ENCODE measurements at regions of chr15 and their contacts with region 1.

Region 1: GRCh38 chr15:73633111-73633990 is at the start of gene NPTN:
- DNase-seq: peak; percentile 99
- H3K4me3 Mint-ChIP-seq: peak within 1 kb of the TSS; percentile 78
- H3K27ac Mint-ChIP-seq: no peak within 1 kb of the TSS
- H3K4me1 Mint-ChIP-seq: peaks cover 52% of the 10 kb centered on the region
- H3K27me3 Mint-ChIP-seq: peaks cover 12% of the 10 kb centered on the region
- total RNA-seq, gene NPTN: 20.8 to 22.8 TPM

Region 2: GRCh38 chr15:73051811-73052678 is 581.3 kb before region 1 on chr15 and contains the start of gene NEO1:
- CTCF ChIA-PET with region 1: no interaction called
- intact Hi-C with region 1: loop called (anchors 5 kb)
- DNase-seq: peak; percentile 81
- H3K4me3 Mint-ChIP-seq: peak within 1 kb of the TSS; percentile 77
- H3K27ac Mint-ChIP-seq: no peak within 1 kb of the TSS
- H3K4me1 Mint-ChIP-seq: peaks cover 6% of the 10 kb centered on the region
- H3K27me3 Mint-ChIP-seq: peaks cover 8% of the 10 kb centered on the region
- total RNA-seq, gene NEO1: 4.3 to 4.4 TPM

Region 3: GRCh38 chr15:73305331-73306211 is 327.8 kb before region 1 on chr15:
- CTCF ChIA-PET with region 1: interaction called, 4 read pairs
- intact Hi-C with region 1: loop called (anchors 1 kb)
- DNase-seq: peak; percentile 36
- H3K4me3 Mint-ChIP-seq: no peak overlapping the region
- H3K27ac Mint-ChIP-seq: no peak overlapping the region
- H3K4me1 Mint-ChIP-seq: peaks cover 4% of the 10 kb centered on the region
- H3K27me3 Mint-ChIP-seq: no peaks in the 10 kb centered on the region

Region 4: GRCh38 chr15:73601451-73602445 is 31.6 kb before region 1 on chr15:
- CTCF ChIA-PET with region 1: interaction called, 63 read pairs
- intact Hi-C with region 1: no loop called
- DNase-seq: no peak
- H3K4me3 Mint-ChIP-seq: no peak overlapping the region
- H3K27ac Mint-ChIP-seq: no peak overlapping the region
- H3K4me1 Mint-ChIP-seq: peaks cover 22% of the 10 kb centered on the region
- H3K27me3 Mint-ChIP-seq: no peaks in the 10 kb centered on the region

Region 5: DNA sequence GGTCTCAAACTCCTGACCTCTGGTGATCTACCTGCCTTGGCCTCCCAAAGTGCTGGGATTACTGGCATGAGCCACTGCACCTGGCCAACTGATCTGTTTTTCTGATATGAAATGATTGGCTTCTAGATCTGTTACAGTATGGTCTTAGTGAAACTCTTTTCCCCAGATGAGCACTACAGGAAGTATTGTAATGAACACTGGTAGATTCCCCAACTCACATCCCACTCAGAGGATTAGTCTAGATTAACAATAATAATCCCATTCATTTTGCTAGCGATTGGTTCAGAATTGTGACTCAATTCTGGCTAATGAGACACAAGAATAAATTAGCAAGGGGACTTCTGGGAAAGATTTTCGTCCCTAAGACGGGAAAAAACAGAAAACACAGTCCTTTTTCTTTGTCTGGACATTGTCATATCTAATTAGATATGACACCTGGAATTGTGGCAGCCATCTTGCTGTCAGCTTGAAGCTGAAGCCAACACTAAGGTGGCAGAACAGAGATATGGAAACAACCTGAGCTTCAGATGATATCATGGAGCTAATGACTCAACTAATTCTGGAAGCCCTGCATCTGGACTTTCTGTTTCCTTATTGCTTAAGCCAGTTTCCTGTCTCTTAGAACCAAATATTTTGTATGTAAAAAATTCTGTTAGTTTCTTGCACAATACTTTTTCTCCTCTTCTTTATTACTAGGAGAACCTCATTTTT is 17.2 kb after region 1 on chr15:
- CTCF ChIA-PET with region 1: interaction called, 40 read pairs
- intact Hi-C with region 1: loop called (anchors 1 kb)
- DNase-seq: peak; percentile 48
- H3K4me3 Mint-ChIP-seq: no peak overlapping the region
- H3K27ac Mint-ChIP-seq: peak overlapping the region; percentile 60
- H3K4me1 Mint-ChIP-seq: peaks cover 28% of the 10 kb centered on the region
- H3K27me3 Mint-ChIP-seq: peaks cover 15% of the 10 kb centered on the region

Region 6: GRCh38 chr15:73697033-73697467 is 63.7 kb after region 1 on chr15:
- CTCF ChIA-PET with region 1: interaction called, 414 read pairs
- intact Hi-C with region 1: loop called (anchors 1 kb)
- DNase-seq: peak; percentile 95
- H3K4me3 Mint-ChIP-seq: peak overlapping the region; percentile 9
- H3K27ac Mint-ChIP-seq: peak overlapping the region; percentile 35
- H3K4me1 Mint-ChIP-seq: peaks cover 24% of the 10 kb centered on the region
- H3K27me3 Mint-ChIP-seq: peaks cover 60% of the 10 kb centered on the region

Region 7: GRCh38 chr15:73873889-73874511 is 240.6 kb after region 1 on chr15:
- CTCF ChIA-PET with region 1: no interaction called
- intact Hi-C with region 1: no loop called
- DNase-seq: peak; percentile 51
- H3K4me3 Mint-ChIP-seq: no peak overlapping the region
- H3K27ac Mint-ChIP-seq: no peak overlapping the region
- H3K4me1 Mint-ChIP-seq: no peaks in the 10 kb centered on the region
- H3K27me3 Mint-ChIP-seq: peaks cover 26% of the 10 kb centered on the region